ENCODE measurements at regions of chr10 and their contacts with region 1.

Region 1: DNA sequence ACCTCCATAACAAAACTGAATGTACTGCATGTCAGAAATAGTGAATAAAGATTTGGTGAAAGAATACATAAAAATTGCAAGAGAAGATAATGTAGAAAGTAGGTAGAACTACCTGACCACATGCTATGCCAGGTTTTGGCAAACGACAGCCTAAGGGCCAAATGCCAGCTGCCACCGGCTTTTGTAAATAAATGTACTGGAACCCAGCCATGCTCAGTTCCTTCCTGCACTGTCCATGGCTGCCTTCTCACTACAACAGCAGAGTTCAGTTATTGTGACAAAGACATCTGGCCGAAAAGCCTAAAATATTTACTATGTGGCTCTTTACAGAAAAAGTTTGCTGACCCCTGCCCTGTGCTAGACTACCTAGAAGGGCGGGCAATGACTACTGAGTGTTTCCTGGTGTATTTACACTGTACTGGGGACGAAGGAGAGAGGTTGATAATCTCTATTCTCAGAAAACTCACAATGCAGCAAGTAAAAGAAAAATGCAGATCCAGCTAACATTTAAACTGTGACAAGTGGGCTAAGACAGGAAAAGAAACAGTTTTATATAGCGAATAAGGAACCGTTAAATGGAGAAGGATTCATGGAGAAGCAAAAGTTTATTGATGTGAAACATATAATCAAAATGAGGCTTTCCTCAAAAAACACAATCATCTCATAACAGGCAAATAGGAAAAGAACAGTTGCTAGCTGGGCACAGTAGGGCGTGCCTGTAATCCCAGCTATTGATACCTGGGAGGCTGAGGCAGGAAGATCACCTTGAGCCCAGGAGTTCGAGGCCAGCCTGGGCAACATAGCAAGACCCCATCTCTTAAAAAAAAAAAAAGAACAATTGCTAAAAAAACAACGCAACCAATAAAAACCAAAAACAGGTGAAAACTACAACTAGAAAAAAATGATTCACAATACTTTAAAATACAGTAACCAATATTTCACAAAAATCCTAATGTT is 13.7 kb downstream of the KIN start:
- DNase-seq: no peak
- H3K4me3 ChIP-seq: no peak overlapping the region
- H3K27ac ChIP-seq: no peak overlapping the region
- H3K4me1 ChIP-seq: no peaks in the 10 kb centered on the region
- H3K27me3 ChIP-seq: no peaks in the 10 kb centered on the region
- CTCF ChIP-seq: no peak

Region 2: DNA sequence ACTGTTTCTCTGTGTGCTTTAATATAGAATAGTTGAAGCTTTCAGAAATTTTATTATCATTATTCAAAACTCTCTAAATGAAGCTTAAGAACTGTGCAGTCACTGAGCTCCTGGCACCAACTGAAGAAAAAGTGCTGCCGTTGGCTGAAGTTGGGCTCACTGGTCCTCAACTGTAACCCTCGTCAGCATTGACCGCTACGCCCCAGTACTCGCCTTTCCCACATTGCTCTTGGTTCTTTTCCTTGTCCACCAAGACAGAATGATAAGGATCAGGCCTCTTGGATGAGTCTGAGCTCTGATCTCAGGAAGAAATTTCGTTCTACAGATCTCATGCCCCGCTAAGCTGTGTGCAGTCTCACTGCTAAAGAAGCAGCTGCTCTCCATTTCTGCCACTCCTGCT is 36.3 kb after region 1 on chr10:
- intact Hi-C with region 1: loop called (anchors 2 kb)
- DNase-seq: no peak
- H3K4me3 ChIP-seq: no peak overlapping the region
- H3K27ac ChIP-seq: no peak overlapping the region
- H3K4me1 ChIP-seq: no peaks in the 10 kb centered on the region
- H3K27me3 ChIP-seq: no peaks in the 10 kb centered on the region
- CTCF ChIP-seq: no peak

Measured in tibial artery (tissue), 4 donors.